ENCODE measurements at regions of chr2 and their contacts with region 1.

Region 1: DNA sequence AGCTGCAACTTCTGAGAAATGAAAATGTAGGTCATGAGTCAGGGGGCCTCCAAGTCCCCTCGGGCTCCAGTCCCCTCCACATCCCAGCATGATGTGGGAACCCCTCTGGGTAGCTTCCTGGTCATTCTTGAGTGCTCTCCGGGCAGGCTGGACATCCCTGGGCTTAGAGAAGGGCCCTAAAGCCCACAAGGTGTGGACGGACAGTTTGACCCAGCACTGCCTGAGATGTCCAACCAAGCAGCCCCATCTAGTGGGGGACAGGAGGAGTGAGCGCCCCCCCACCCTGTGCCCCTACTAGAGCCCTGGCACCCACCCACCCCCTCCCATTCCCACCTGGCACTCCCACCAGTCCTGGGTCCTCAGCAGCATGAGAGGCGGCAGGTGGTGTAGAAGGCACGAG is 46.0 kb downstream of the CYP27C1 start:
- DNase-seq: peak in 1 of 3 donors; percentile 28
- ATAC-seq: no peak
- H3K4me3 ChIP-seq: no peak overlapping the region
- H3K4me1 ChIP-seq: no peaks in the 10 kb centered on the region
- CTCF ChIP-seq: no peak

Region 2: GRCh38 chr2:127064642-127065250 is 109.4 kb before region 1 on chr2:
- intact Hi-C with region 1: loop called in 1 of 2 experiments (anchors 10 kb)
- DNase-seq: peak; percentile 69 to 89 (median 76)
- ATAC-seq: peak; percentile 86
- H3K4me3 ChIP-seq: no peak overlapping the region
- H3K4me1 ChIP-seq: peaks cover 6% of the 10 kb centered on the region
- CTCF ChIP-seq: no peak